Posterior vena cava (tissue), 2 donors: ENCODE measurements at regions of chr7 and their contacts with region 1.

Region 1: DNA sequence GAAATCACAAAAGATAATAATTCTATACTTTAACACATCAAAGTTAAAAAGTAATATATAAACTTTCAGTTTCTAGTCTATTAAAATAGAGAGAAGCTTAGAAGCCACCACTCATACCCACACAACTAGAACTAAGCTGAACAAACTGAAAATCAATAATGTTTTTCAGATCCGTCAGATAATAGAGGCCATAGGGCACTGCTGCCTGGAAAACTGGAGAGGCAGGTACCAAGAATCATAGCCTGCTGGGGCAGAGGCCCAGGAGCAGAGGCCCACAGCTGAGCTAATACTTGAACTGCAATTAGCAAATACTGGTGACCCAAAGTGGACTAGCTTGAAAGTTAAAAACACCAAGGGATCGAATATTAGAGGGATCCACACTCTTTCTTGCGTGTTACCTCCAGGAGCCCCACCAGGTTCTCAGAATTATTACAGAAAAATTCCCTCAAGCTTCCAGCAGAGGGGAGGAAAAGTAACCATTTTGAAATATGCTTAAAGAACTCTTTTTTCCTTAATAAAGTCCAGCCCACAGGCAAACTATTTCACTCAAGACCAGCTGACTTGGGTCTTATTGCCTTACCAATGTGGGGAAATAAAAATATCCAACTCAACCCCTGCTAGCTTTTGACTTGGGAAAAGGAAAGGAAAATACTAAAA is 774.1 kb upstream of the IGFBP3 start:
- DNase-seq: no peak

Region 2: DNA sequence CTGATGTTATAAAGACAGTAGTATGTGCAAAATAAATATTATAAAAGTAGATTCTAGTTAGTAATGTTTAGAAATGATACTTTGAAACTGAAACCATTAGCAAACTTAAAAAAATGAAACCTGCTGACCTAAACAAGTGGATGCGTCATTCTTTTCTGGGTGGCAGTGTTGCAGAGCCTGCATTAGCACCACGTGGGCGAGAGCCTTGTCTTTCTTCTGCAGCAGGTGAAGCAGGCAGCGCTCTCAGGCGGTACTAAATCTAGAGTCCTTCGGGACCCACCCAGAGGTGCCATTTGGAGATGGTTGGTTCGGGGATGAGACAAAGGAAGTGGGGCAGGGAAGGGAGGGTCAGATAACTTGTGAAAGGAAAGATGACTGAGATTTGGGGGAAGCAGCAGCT is 15.0 kb before region 1 on chr7:
- intact Hi-C with region 1: loop called in 1 of 2 experiments (anchors 1 kb)
- DNase-seq: no peak